ENCODE measurements at regions of chr6 and their contacts with region 1.

Region 1: DNA sequence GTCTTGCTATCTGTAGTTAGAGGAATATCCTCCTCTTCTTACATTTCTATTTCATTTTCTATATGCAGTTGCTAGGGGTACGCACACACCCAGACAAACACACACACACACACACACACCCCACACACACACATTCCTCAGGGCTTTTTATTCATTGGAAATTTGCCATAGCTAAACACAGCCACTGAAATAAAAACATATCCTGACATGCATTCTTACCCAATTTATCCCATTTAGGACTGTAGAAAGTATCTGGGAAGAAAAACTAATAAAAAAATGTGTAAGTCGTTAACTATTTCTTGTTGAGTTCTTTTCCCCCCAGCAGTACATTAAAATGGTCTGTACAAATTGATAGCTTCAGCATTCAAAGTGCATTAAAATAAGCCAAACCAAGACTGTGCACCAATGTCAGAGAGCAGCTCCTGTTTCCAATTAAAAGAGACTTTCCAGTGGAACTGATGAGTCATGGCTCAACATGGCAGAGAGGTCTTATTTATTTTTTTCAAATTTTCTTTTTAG is 357.9 kb upstream of the AGPAT4 start:
- DNase-seq: no peak
- ATAC-seq: no peak
- H3K4me3 ChIP-seq: no peak overlapping the region
- H3K4me3 Mint-ChIP-seq: no peak overlapping the region
- H3K27ac ChIP-seq: no peak overlapping the region
- H3K27ac Mint-ChIP-seq: no peak overlapping the region
- H3K4me1 ChIP-seq: no peaks in the 10 kb centered on the region
- H3K4me1 Mint-ChIP-seq: peaks cover 0 to 14% (median 11%) of the 10 kb centered on the region in 3 donors
- H3K27me3 ChIP-seq: no peaks in the 10 kb centered on the region
- H3K27me3 Mint-ChIP-seq: no peaks in the 10 kb centered on the region

Region 2: DNA sequence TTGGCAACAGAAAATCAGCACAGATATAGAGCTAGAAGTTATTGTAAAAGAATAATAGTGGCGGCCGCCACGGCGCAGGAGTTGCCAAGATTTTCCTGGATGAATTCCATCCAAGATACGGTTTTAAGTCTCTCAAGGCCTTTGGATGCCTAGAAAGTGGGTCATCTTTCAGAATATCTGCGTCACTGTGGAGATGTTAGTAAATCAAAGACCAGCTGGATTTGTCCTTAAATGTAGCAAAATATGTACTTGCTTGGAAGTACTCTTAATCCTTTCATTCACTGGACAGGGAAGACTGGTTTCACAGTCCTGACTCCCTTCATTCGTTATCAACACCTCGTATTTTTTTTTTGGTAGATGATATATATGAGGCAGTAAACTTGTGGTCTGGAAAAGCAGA is 1200.5 kb before region 1 on chr6:
- CTCF ChIA-PET with region 1: no interaction called
- POLR2A ChIA-PET with region 1: no interaction called
- DNase-seq: no peak
- ATAC-seq: no peak
- H3K4me3 ChIP-seq: no peak overlapping the region
- H3K4me3 Mint-ChIP-seq: no peak overlapping the region
- H3K27ac ChIP-seq: no peak overlapping the region
- H3K27ac Mint-ChIP-seq: no peak overlapping the region
- H3K4me1 ChIP-seq: peaks cover 0 to 6% of the 10 kb centered on the region in 2 experiments
- H3K4me1 Mint-ChIP-seq: peaks cover 15 to 18% (median 16%) of the 10 kb centered on the region in 3 donors
- H3K27me3 ChIP-seq: peaks cover 11 to 18% of the 10 kb centered on the region in 2 experiments
- H3K27me3 Mint-ChIP-seq: peaks cover 35 to 53% of the 10 kb centered on the region in 2 donors

Region 3: DNA sequence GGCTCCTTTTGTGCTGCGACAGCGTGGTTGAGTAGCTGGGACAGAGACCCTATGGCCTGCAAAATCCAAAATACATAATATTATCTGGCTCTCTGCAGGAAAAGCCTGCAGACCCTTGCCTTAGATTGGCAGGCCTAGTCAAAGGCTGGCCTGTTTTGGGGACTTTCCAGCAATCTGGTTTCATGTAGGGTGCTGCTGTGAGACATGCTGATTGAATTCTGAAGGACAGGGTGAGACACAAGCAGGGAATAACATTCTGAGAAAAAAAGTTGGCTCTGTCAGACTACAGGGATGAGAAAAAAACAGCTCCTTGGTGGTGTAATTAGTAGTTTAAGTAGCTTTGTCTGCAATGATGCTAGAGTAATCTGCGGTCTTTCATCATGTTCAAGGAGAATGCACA is 44.9 kb after region 1 on chr6:
- CTCF ChIA-PET with region 1: no interaction called
- POLR2A ChIA-PET with region 1: no interaction called
- DNase-seq: no peak
- ATAC-seq: no peak
- H3K4me3 ChIP-seq: no peak overlapping the region
- H3K4me3 Mint-ChIP-seq: no peak overlapping the region
- H3K27ac ChIP-seq: no peak overlapping the region
- H3K27ac Mint-ChIP-seq: no peak overlapping the region
- H3K4me1 ChIP-seq: no peaks in the 10 kb centered on the region
- H3K4me1 Mint-ChIP-seq: no peaks in the 10 kb centered on the region
- H3K27me3 ChIP-seq: no peaks in the 10 kb centered on the region
- H3K27me3 Mint-ChIP-seq: no peaks in the 10 kb centered on the region

Region 4: DNA sequence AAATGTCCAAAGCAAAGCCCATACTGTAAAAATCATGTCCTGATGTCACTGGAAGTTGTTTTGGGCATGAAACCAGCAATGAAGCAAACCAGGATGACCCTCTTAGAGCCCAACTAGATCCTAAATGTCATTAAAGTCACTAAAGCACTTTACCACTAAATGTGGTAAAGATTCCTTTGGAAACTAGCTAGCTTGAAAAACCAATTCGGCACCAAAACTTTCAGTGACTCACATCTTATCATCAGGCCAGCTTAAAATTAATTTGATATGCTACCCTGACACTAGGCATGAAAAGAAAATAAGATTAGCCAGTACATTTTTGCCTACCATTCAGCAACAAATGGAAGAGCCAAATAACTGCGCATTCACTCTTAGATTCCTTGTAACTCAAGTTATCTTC is 1241.8 kb after region 1 on chr6:
- CTCF ChIA-PET with region 1: no interaction called
- POLR2A ChIA-PET with region 1: no interaction called
- DNase-seq: no peak
- ATAC-seq: no peak
- H3K4me3 ChIP-seq: no peak overlapping the region
- H3K4me3 Mint-ChIP-seq: no peak overlapping the region
- H3K27ac ChIP-seq: no peak overlapping the region
- H3K27ac Mint-ChIP-seq: no peak overlapping the region
- H3K4me1 ChIP-seq: no peaks in the 10 kb centered on the region
- H3K4me1 Mint-ChIP-seq: no peaks in the 10 kb centered on the region
- H3K27me3 ChIP-seq: no peaks in the 10 kb centered on the region
- H3K27me3 Mint-ChIP-seq: no peaks in the 10 kb centered on the region

Region 5: GRCh38 chr6:163085861-163086623 is 1454.3 kb after region 1 on chr6:
- CTCF ChIA-PET with region 1: no interaction called
- POLR2A ChIA-PET with region 1: interaction called in 1 of 2 experiments, 15 read pairs
- DNase-seq: no peak
- ATAC-seq: no peak
- H3K4me3 ChIP-seq: no peak overlapping the region
- H3K4me3 Mint-ChIP-seq: no peak overlapping the region
- H3K27ac ChIP-seq: no peak overlapping the region
- H3K27ac Mint-ChIP-seq: no peak overlapping the region
- H3K4me1 ChIP-seq: no peaks in the 10 kb centered on the region
- H3K4me1 Mint-ChIP-seq: no peaks in the 10 kb centered on the region
- H3K27me3 ChIP-seq: no peaks in the 10 kb centered on the region
- H3K27me3 Mint-ChIP-seq: no peaks in the 10 kb centered on the region